ENCODE measurements at regions of chr5 and their contacts with region 1.

Region 1: GRCh38 chr5:171405601-171406005 is 13.8 kb upstream of the FGF18 start:
- DNase-seq: peak; percentile 33
- H3K4me3 ChIP-seq: no peak overlapping the region
- H3K27ac ChIP-seq: no peak overlapping the region
- H3K4me1 ChIP-seq: no peaks in the 10 kb centered on the region
- CTCF ChIP-seq: peak; percentile 70

Region 2: GRCh38 chr5:171387345-171387969 is 18.1 kb before region 1 on chr5 and contains the start of gene NPM1:
- CTCF ChIA-PET with region 1: no interaction called
- POLR2A ChIA-PET with region 1: interaction called, 10 read pairs
- intact Hi-C with region 1: loop called (anchors 2 kb)
- DNase-seq: peak; percentile 98
- H3K4me3 ChIP-seq: peak within 1 kb of the TSS; percentile 99
- H3K27ac ChIP-seq: peak within 1 kb of the TSS; percentile 82
- H3K4me1 ChIP-seq: peaks cover 37% of the 10 kb centered on the region
- CTCF ChIP-seq: no peak
- total RNA-seq, gene NPM1: 1,091 and 1,434 TPM in 2 replicates

Region 3: GRCh38 chr5:171392585-171393159 is 12.9 kb before region 1 on chr5:
- CTCF ChIA-PET with region 1: no interaction called
- POLR2A ChIA-PET with region 1: interaction called, 10 read pairs
- intact Hi-C with region 1: loop called (anchors 2 kb)
- DNase-seq: no peak
- H3K4me3 ChIP-seq: peak overlapping the region; percentile 99
- H3K27ac ChIP-seq: peak overlapping the region; percentile 11
- H3K4me1 ChIP-seq: peaks cover 35% of the 10 kb centered on the region
- CTCF ChIP-seq: peak; percentile 51

Region 4: DNA sequence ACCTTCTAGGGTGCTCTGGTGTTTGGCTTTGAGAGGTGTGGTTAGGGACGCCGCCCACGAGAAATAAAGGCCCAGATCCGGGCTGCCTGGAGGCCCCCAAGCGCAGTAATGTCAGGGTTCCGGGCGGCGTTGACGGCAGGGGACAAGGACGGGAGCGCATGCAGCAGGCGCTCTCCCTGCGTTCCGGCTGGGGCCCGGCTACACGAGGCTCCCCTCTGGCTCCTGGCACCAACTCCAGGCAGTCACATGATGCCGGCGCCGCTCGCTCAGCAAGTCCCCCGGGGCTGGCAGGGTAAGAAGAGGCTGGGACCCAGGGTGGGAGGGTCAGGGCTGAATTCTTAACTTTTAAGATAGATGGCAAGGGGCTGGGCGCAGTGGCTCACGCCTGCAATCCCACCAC is 849.8 kb after region 1 on chr5:
- CTCF ChIA-PET with region 1: no interaction called
- POLR2A ChIA-PET with region 1: no interaction called
- intact Hi-C with region 1: no loop called
- DNase-seq: no peak
- H3K4me3 ChIP-seq: no peak overlapping the region
- H3K27ac ChIP-seq: no peak overlapping the region
- H3K4me1 ChIP-seq: no peaks in the 10 kb centered on the region
- CTCF ChIP-seq: no peak

Measured in OCI-LY7 (cell line).